CD4-positive, alpha-beta T cell (primary cell): ENCODE measurements at regions of chr17 and their contacts with region 1.

Region 1: GRCh38 chr17:43388359-43389045 is 10.3 kb upstream of the ARL4D start:
- DNase-seq: peak; percentile 84 to 95 (median 90)
- ATAC-seq: peak; percentile 70
- H3K4me3 ChIP-seq: peak overlapping the region; percentile 71
- H3K4me3 Mint-ChIP-seq: peak overlapping the region; percentile 93
- H3K27ac ChIP-seq: peak overlapping the region; percentile 94 to 97
- H3K27ac Mint-ChIP-seq: peak overlapping the region; percentile 97
- H3K4me1 ChIP-seq: peaks cover 27% of the 10 kb centered on the region
- H3K4me1 Mint-ChIP-seq: peaks cover 36% of the 10 kb centered on the region
- H3K27me3 ChIP-seq: no peaks in the 10 kb centered on the region
- H3K27me3 Mint-ChIP-seq: no peaks in the 10 kb centered on the region
- CTCF ChIP-seq: no peak

Region 2: GRCh38 chr17:43170766-43171585 is 217.5 kb before region 1 on chr17 and contains the start of gene NBR1:
- CTCF ChIA-PET with region 1: no interaction called
- POLR2A ChIA-PET with region 1: interaction called, 10 read pairs
- intact Hi-C with region 1: loop called in 1 of 2 experiments (anchors 1 kb)
- DNase-seq: peak; percentile 90 to 99 (median 92)
- ATAC-seq: peak; percentile 76
- H3K4me3 ChIP-seq: peak within 1 kb of the TSS; percentile 71
- H3K4me3 Mint-ChIP-seq: no peak within 1 kb of the TSS
- H3K27ac ChIP-seq: peak within 1 kb of the TSS; percentile 98
- H3K27ac Mint-ChIP-seq: no peak within 1 kb of the TSS
- H3K4me1 ChIP-seq: peaks cover 47% of the 10 kb centered on the region
- H3K4me1 Mint-ChIP-seq: peaks cover 27% of the 10 kb centered on the region
- H3K27me3 ChIP-seq: no peaks in the 10 kb centered on the region
- H3K27me3 Mint-ChIP-seq: no peaks in the 10 kb centered on the region
- CTCF ChIP-seq: no peak
- total RNA-seq, gene NBR1: 23.7 TPM

Region 3: GRCh38 chr17:43200127-43200526 is 188.4 kb before region 1 on chr17:
- CTCF ChIA-PET with region 1: no interaction called
- POLR2A ChIA-PET with region 1: no interaction called
- intact Hi-C with region 1: no loop called
- DNase-seq: no peak
- ATAC-seq: no peak
- H3K4me3 ChIP-seq: no peak overlapping the region
- H3K4me3 Mint-ChIP-seq: no peak overlapping the region
- H3K27ac ChIP-seq: no peak overlapping the region
- H3K27ac Mint-ChIP-seq: no peak overlapping the region
- H3K4me1 ChIP-seq: no peaks in the 10 kb centered on the region
- H3K4me1 Mint-ChIP-seq: no peaks in the 10 kb centered on the region
- H3K27me3 ChIP-seq: no peaks in the 10 kb centered on the region
- H3K27me3 Mint-ChIP-seq: no peaks in the 10 kb centered on the region
- CTCF ChIP-seq: no peak

Region 4: GRCh38 chr17:43377056-43377810 is 11.3 kb before region 1 on chr17:
- CTCF ChIA-PET with region 1: no interaction called
- POLR2A ChIA-PET with region 1: interaction called, 445 read pairs
- intact Hi-C with region 1: no loop called
- DNase-seq: no peak
- ATAC-seq: no peak
- H3K4me3 ChIP-seq: no peak overlapping the region
- H3K4me3 Mint-ChIP-seq: no peak overlapping the region
- H3K27ac ChIP-seq: no peak overlapping the region
- H3K27ac Mint-ChIP-seq: no peak overlapping the region
- H3K4me1 ChIP-seq: peaks cover 9% of the 10 kb centered on the region
- H3K4me1 Mint-ChIP-seq: peaks cover 6% of the 10 kb centered on the region
- H3K27me3 ChIP-seq: no peaks in the 10 kb centered on the region
- H3K27me3 Mint-ChIP-seq: no peaks in the 10 kb centered on the region
- CTCF ChIP-seq: no peak